PC-9 (cell line): ENCODE measurements at regions of chr15 and their contacts with region 1.

Region 1: GRCh38 chr15:65516997-65517865 is at the start of gene DPP8:
- DNase-seq: peak; percentile 76 to 93
- H3K4me3 ChIP-seq: peak within 1 kb of the TSS; percentile 74
- H3K27ac ChIP-seq: peak within 1 kb of the TSS; percentile 57
- H3K4me1 ChIP-seq: peaks cover 10% of the 10 kb centered on the region
- H3K27me3 ChIP-seq: no peaks in the 10 kb centered on the region
- CTCF ChIP-seq: peak; percentile 63
- total RNA-seq, gene DPP8: 25.1 and 27.5 TPM in 2 replicates

Region 2: DNA sequence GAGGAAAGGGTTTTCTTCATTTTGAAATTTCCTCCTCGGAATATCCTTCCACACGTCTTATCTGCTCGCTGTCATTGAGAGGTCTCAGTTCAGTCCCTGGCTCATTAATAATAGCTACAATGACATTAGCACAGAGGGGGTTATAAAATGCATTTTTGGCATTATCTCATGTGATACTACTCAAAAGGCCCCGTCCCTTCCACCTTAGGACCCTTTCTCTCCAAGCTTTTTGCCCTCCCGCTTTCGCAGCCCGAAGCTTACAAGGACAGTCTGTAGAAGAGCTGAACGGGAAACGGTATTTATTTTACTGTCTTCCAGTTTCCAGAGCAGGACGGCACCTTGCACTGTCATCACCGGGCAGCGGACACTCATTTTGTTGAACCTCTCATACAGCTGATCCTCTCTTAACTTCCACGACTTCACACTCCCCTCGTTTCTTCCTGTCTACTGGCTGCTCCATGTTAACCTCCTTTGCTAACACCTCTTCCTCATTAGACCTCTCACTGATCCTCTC is 681.2 kb before region 1 on chr15:
- CTCF ChIA-PET with region 1: no interaction called
- POLR2A ChIA-PET with region 1: interaction called, 20 read pairs
- intact Hi-C with region 1: no loop called
- DNase-seq: no peak
- H3K4me3 ChIP-seq: no peak overlapping the region
- H3K27ac ChIP-seq: no peak overlapping the region
- H3K4me1 ChIP-seq: no peaks in the 10 kb centered on the region; the same call in 1 of the 2 replicates
- H3K27me3 ChIP-seq: no peaks in the 10 kb centered on the region
- CTCF ChIP-seq: no peak

Region 3: DNA sequence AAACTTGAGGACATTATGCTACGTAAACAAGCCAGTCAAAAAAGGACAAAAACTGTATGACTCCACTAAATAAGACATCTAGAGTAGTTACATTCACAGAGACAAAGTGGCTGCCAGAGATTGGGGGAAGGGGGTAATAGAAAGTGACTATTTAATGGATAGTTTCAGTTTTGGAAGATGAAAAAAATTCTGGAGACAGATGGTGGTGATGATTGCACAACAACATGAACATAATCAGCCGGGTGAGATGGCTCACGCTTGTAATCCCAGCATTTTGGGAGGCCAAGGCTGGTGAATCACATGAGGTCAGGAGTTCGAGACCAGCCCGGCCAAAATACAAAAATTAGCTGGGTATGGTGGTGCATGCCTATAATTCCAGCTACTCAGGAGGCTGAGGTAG is 40.3 kb before region 1 on chr15:
- CTCF ChIA-PET with region 1: no interaction called
- POLR2A ChIA-PET with region 1: no interaction called
- intact Hi-C with region 1: no loop called
- DNase-seq: no peak
- H3K4me3 ChIP-seq: no peak overlapping the region
- H3K27ac ChIP-seq: no peak overlapping the region
- H3K4me1 ChIP-seq: no peaks in the 10 kb centered on the region
- H3K27me3 ChIP-seq: no peaks in the 10 kb centered on the region
- CTCF ChIP-seq: no peak

Region 4: GRCh38 chr15:65610871-65611718 is 93.9 kb after region 1 on chr15 and contains the start of gene INTS14:
- CTCF ChIA-PET with region 1: interaction called, 6 read pairs
- POLR2A ChIA-PET with region 1: no interaction called
- intact Hi-C with region 1: loop called (anchors 1 kb)
- DNase-seq: peak; percentile 79 to 97
- H3K4me3 ChIP-seq: peak within 1 kb of the TSS; percentile 88
- H3K27ac ChIP-seq: peak within 1 kb of the TSS; percentile 91
- H3K4me1 ChIP-seq: peaks cover 21% of the 10 kb centered on the region
- H3K27me3 ChIP-seq: no peaks in the 10 kb centered on the region
- CTCF ChIP-seq: peak; percentile 68
- total RNA-seq, gene INTS14: 46.6 and 53.7 TPM in 2 replicates

Region 5: DNA sequence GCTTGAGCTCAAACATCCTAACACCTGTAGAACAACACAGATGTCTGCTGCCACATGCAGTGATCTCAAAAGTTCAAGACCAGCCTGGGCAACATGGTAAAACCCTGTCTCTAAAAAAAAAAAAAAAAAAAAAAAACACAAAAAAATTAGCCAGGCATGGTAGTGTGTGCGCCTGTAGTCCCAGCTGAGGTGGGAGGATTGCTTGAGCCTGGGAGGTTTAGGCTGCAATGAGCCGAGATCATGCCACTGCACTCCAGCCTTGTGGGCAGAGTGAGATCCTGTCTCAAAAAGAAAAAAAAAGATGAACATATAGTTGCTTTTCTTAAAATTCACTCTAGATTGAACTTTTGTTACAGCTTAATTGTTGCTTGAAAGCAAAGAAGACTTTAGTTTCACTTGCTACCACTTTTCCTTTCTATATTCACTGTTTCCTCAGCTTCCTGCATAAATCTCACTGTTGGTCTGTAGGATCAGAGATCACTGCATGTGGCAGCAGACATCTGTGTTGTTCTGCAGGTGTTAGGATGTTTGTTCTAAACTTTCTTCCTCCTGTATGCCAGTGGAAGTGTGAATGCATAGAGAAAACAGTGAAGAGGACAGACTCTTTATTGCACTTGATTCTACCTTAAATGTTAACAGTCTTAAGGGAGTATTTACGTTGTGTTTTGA is 364.7 kb after region 1 on chr15:
- CTCF ChIA-PET with region 1: interaction called, 13 read pairs
- POLR2A ChIA-PET with region 1: no interaction called
- intact Hi-C with region 1: no loop called
- DNase-seq: no peak
- H3K4me3 ChIP-seq: no peak overlapping the region
- H3K27ac ChIP-seq: no peak overlapping the region
- H3K4me1 ChIP-seq: no peaks in the 10 kb centered on the region
- H3K27me3 ChIP-seq: no peaks in the 10 kb centered on the region
- CTCF ChIP-seq: no peak